Activated B cell treated with CpG ODN at 0.5 μM for 24 hours (primary cell): ENCODE measurements at regions of chr17 and their contacts with region 1.

Region 1: GRCh38 chr17:75271233-75271954 is 363 bp upstream of the MIF4GD start:
- DNase-seq: peak; percentile 95
- ATAC-seq: peak; percentile 91
- H3K4me3 Mint-ChIP-seq: peak overlapping the region; percentile 82
- H3K27ac Mint-ChIP-seq: peak overlapping the region; percentile 76
- H3K4me1 Mint-ChIP-seq: peaks cover 20% of the 10 kb centered on the region
- H3K27me3 Mint-ChIP-seq: no peaks in the 10 kb centered on the region
- CTCF ChIP-seq: no peak

Region 2: DNA sequence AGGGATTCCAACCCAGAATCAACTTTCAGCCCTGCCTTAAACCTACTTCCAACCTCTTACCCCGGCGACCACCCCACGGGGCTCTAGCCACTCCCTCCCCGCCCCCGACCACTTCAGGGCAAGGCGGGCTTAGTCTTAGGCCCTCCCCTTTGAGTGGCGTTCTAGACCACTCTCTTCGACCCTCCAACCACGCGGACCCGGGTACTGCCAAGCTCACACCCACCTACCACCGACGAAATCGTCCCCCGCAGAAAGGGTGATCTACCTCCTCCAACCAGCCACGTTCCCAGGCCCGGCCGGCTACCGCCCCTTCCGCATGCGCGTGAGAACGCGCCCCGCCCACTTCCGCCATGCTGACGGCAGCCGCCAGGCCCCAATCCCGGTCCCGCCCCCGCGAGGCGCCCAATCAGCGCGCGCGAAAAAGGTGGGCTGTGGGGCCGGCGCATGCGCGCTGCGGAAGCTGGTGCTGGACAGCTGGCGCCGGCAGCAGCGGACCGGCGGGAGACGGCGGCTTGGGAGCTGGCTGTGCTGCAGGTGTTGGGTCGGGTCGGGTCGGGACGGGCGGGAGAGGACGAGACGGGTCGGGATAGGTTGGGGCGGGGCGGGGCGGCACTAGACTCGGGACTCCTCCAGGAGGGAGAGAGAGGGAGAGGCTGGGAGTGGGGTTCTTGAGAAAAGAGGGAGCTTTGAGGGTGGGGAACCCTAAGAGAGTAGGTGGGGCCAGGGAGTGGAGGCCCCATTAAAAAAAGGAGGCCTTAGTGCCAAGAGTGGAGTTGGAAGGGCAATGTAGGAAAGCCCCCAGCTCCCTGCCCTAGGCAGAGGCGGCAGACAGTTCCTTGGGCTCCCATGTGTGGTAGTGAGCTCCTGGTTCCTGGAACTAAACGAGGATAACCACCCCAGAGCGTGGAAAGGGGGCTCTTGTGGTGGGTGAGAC is 495.1 kb before region 1 on chr17 and contains the start of gene NAT9:
- CTCF ChIA-PET with region 1: no interaction called
- POLR2A ChIA-PET with region 1: interaction called, 13 read pairs
- intact Hi-C with region 1: no loop called
- DNase-seq: peak; percentile 99
- ATAC-seq: peak; percentile 82
- H3K4me3 Mint-ChIP-seq: peak within 1 kb of the TSS; percentile 99
- H3K27ac Mint-ChIP-seq: peak within 1 kb of the TSS; percentile 89
- H3K4me1 Mint-ChIP-seq: peaks cover 61% of the 10 kb centered on the region
- H3K27me3 Mint-ChIP-seq: no peaks in the 10 kb centered on the region
- CTCF ChIP-seq: no peak
- total RNA-seq, gene NAT9: 59.4 and 79.7 TPM in 2 replicates

Region 3: GRCh38 chr17:75238684-75239191 is 32.7 kb before region 1 on chr17:
- CTCF ChIA-PET with region 1: interaction called, 24 read pairs
- POLR2A ChIA-PET with region 1: interaction called, 11 read pairs
- intact Hi-C with region 1: loop called (anchors 5 kb)
- DNase-seq: peak; percentile 53
- ATAC-seq: peak; percentile 72
- H3K4me3 Mint-ChIP-seq: peak overlapping the region; percentile 57
- H3K27ac Mint-ChIP-seq: peak overlapping the region; percentile 83
- H3K4me1 Mint-ChIP-seq: peaks cover 35% of the 10 kb centered on the region
- H3K27me3 Mint-ChIP-seq: no peaks in the 10 kb centered on the region
- CTCF ChIP-seq: no peak

Region 4: GRCh38 chr17:75250009-75250471 is 21.4 kb before region 1 on chr17:
- CTCF ChIA-PET with region 1: interaction called, 3 read pairs
- POLR2A ChIA-PET with region 1: interaction called, 24 read pairs
- intact Hi-C with region 1: no loop called
- DNase-seq: peak; percentile 46
- ATAC-seq: peak; percentile 88
- H3K4me3 Mint-ChIP-seq: peak overlapping the region; percentile 76
- H3K27ac Mint-ChIP-seq: peak overlapping the region; percentile 87
- H3K4me1 Mint-ChIP-seq: peaks cover 65% of the 10 kb centered on the region
- H3K27me3 Mint-ChIP-seq: no peaks in the 10 kb centered on the region
- CTCF ChIP-seq: no peak

Region 5: DNA sequence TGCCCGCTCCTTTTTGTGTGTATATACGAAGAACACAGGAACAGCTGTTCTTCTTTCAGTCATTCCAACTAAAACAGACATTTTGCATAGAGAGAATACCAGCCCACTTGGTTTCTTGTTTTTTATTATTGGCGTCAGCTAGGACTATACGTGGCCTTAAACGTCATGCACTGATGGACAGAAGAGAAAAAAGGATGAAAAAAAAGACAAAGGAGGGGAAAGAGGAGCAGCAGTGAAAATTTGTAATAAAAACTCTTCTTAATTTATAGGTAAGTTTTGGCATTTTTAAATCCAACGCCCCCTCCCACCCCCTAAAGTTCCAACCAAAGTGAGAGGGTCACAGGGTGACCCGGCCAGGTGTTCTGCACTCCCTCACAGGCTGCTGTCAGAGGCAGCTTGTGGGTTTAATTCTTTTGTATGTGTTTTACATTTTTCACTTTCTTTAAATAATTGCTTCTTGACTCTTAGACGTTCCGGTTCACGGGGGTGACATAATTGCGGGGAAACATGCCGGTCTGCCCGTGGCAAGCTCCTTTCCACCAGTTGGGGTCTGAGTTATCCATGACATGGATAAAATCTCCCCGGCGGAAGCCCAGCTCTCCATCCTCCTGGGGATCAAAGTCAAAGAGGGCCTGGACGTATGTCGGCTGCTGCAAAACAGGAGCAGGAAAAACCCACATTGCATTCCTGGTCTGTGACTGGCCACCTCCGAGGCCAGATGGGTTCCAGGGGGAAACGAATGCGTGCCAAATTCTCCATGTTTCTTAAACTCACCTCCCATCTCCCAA is 48.7 kb after region 1 on chr17:
- CTCF ChIA-PET with region 1: interaction called, 4 read pairs
- POLR2A ChIA-PET with region 1: interaction called, 16 read pairs
- intact Hi-C with region 1: no loop called
- DNase-seq: no peak
- ATAC-seq: peak; percentile 53
- H3K4me3 Mint-ChIP-seq: peak overlapping the region; percentile 70
- H3K27ac Mint-ChIP-seq: peak overlapping the region; percentile 93
- H3K4me1 Mint-ChIP-seq: peaks cover 87% of the 10 kb centered on the region
- H3K27me3 Mint-ChIP-seq: no peaks in the 10 kb centered on the region
- CTCF ChIP-seq: no peak

Region 6: GRCh38 chr17:75456417-75457046 is 185.1 kb after region 1 on chr17 and contains the start of gene TMEM94:
- CTCF ChIA-PET with region 1: no interaction called
- POLR2A ChIA-PET with region 1: interaction called, 13 read pairs
- intact Hi-C with region 1: no loop called
- DNase-seq: peak; percentile 74
- ATAC-seq: peak; percentile 94
- H3K4me3 Mint-ChIP-seq: peak within 1 kb of the TSS; percentile 91
- H3K27ac Mint-ChIP-seq: peak within 1 kb of the TSS; percentile 88
- H3K4me1 Mint-ChIP-seq: peaks cover 41% of the 10 kb centered on the region
- H3K27me3 Mint-ChIP-seq: no peaks in the 10 kb centered on the region
- CTCF ChIP-seq: no peak
- total RNA-seq, gene TMEM94: 80.3 and 86.6 TPM in 2 replicates

Region 7: GRCh38 chr17:75589012-75589918 is 317.9 kb after region 1 on chr17:
- CTCF ChIA-PET with region 1: no interaction called
- POLR2A ChIA-PET with region 1: no interaction called
- intact Hi-C with region 1: loop called (anchors 2 kb)
- DNase-seq: peak; percentile 97
- ATAC-seq: peak; percentile 84
- H3K4me3 Mint-ChIP-seq: peak overlapping the region; percentile 84
- H3K27ac Mint-ChIP-seq: peak overlapping the region; percentile 73
- H3K4me1 Mint-ChIP-seq: peaks cover 16% of the 10 kb centered on the region
- H3K27me3 Mint-ChIP-seq: no peaks in the 10 kb centered on the region
- CTCF ChIP-seq: no peak